Dendritic cell treated with granulocyte-macrophage colony-stimulating factor and Interleukin-4, amounts not matched to agents 40 ng/mL and 50 ng/mL, for 4 days (primary cell): ENCODE measurements at regions of chr17 and their contacts with region 1.

Region 1: DNA sequence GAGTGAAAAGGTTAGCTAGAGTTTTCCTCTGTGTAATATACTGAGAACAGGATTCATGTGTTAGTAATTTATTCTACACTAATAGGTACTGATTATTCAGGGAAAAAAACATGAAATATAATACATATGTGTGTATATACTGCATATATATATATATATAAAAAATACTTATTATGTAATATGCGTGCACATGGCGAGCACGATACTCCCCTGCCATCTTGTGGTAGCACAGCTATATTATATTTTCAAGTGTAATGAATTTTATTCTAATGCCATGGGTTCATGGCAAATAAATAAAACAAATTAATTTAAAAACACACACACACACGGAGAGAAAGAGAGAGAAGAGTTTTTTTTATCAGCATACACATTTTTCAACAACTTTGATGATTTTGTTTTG is 460.6 kb downstream of the KCNJ2 start:
- H3K4me3 Mint-ChIP-seq: no peak overlapping the region
- H3K27ac Mint-ChIP-seq: no peak overlapping the region
- H3K4me1 Mint-ChIP-seq: peaks cover 22% of the 10 kb centered on the region
- H3K27me3 Mint-ChIP-seq: peaks cover 16% of the 10 kb centered on the region

Region 2: GRCh38 chr17:69574257-69575197 is 1055.4 kb before region 1 on chr17:
- intact Hi-C with region 1: loop called (anchors 1 kb)
- H3K4me3 Mint-ChIP-seq: no peak overlapping the region
- H3K27ac Mint-ChIP-seq: no peak overlapping the region
- H3K4me1 Mint-ChIP-seq: no peaks in the 10 kb centered on the region
- H3K27me3 Mint-ChIP-seq: peaks cover 6% of the 10 kb centered on the region